ENCODE measurements at regions of chr6 and their contacts with region 1.

Region 1: DNA sequence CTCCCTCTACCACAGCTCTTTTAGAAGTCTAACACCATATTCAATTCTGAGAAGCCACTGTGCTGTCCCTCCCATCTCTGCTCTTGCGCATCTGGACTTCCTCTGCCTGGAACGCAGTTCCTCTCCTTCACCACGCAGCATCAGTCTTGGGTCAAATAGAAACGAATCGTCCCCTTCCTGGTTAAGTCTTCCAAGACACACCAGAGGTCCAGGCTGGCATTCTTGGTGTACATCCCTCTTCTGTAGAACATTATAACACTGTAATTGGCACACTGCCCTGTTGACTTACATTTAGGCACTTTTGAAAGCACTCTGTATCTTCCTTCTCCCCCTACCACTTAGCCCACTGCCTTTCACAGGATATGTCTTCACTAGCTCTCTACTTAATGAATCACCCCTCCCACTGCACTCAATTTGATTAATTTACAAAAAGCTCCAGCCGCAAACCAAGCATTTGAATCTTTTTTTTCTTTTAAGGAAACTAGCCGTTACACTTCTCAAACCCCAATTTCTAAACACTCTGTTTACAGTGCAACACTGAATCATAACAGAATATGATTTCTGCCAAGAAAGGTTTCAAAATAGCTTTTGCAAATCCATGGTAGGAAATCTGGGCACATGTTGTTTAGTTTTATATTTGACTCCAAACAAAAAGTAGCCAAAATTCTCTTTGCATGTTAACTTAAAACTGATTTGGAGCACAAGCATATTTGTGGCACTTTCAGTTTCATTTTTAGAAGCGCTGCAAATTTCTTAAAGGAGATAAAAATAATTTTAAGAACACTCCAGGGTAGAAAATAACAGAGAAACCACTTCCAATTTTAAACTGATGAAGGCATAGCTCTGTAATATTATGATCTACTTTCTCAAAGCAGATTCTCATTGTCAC is 140.7 kb upstream of the CARMIL1 start:
- DNase-seq: peak; percentile 72
- H3K4me3 Mint-ChIP-seq: peak overlapping the region; percentile 90
- H3K27ac Mint-ChIP-seq: peak overlapping the region; percentile 97
- H3K4me1 Mint-ChIP-seq: peaks cover 41% of the 10 kb centered on the region
- H3K27me3 Mint-ChIP-seq: no peaks in the 10 kb centered on the region

Region 2: GRCh38 chr6:24974182-24975171 is 164.0 kb before region 1 on chr6:
- intact Hi-C with region 1: loop called (anchors 1 kb)
- DNase-seq: no peak
- H3K4me3 Mint-ChIP-seq: peak overlapping the region; percentile 34
- H3K27ac Mint-ChIP-seq: peak overlapping the region; percentile 86
- H3K4me1 Mint-ChIP-seq: peaks cover 52% of the 10 kb centered on the region
- H3K27me3 Mint-ChIP-seq: no peaks in the 10 kb centered on the region

Region 3: DNA sequence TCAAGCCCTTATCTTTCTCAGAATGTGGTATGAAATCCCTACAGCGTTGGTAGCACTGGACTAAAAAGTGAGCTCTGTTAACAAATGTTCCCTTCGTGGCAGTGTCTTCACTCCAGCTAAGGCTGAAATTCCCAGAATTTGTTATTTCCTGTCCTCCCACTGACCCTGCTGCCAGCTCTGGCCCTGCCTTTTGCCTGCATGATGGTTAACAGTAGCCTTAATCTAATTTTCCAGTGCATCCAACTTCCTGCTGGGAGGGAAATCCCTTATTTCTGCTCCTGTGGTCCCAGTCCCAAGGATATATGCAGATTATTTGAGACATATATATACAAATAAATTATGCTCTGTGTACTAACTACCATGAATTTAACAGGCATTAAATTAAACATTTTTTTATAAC is 16.5 kb before region 1 on chr6:
- intact Hi-C with region 1: loop called (anchors 2 kb)
- DNase-seq: no peak
- H3K4me3 Mint-ChIP-seq: no peak overlapping the region
- H3K27ac Mint-ChIP-seq: no peak overlapping the region
- H3K4me1 Mint-ChIP-seq: peaks cover 72% of the 10 kb centered on the region
- H3K27me3 Mint-ChIP-seq: no peaks in the 10 kb centered on the region

Region 4: GRCh38 chr6:25179051-25179778 is 40.7 kb after region 1 on chr6:
- intact Hi-C with region 1: loop called (anchors 1 kb)
- DNase-seq: no peak
- H3K4me3 Mint-ChIP-seq: peak overlapping the region; percentile 70
- H3K27ac Mint-ChIP-seq: peak overlapping the region; percentile 93
- H3K4me1 Mint-ChIP-seq: peaks cover 90% of the 10 kb centered on the region
- H3K27me3 Mint-ChIP-seq: no peaks in the 10 kb centered on the region

Region 5: GRCh38 chr6:25962149-25963127 is 824.0 kb after region 1 on chr6 and contains the start of gene TRIM38:
- intact Hi-C with region 1: loop called (anchors 5 kb)
- DNase-seq: peak; percentile 76
- H3K4me3 Mint-ChIP-seq: peak within 1 kb of the TSS; percentile 94
- H3K27ac Mint-ChIP-seq: peak within 1 kb of the TSS; percentile 95
- H3K4me1 Mint-ChIP-seq: peaks cover 85% of the 10 kb centered on the region
- H3K27me3 Mint-ChIP-seq: no peaks in the 10 kb centered on the region
- total RNA-seq, gene TRIM38: 24.5 and 25.3 TPM in 2 replicates